Left ventricle myocardium inferior (tissue), 1 donor: ENCODE measurements at regions of chr12 and their contacts with region 1.

Region 1: GRCh38 chr12:96416033-96416801 is 16.0 kb upstream of the CDK17 start:
- DNase-seq: no peak
- H3K4me3 ChIP-seq: no peak overlapping the region
- H3K27ac ChIP-seq: no peak overlapping the region
- H3K4me1 ChIP-seq: no peaks in the 10 kb centered on the region
- H3K27me3 ChIP-seq: no peaks in the 10 kb centered on the region
- CTCF ChIP-seq: no peak

Region 2: GRCh38 chr12:96054244-96054610 is 362.0 kb before region 1 on chr12:
- intact Hi-C with region 1: loop called (anchors 10 kb)
- DNase-seq: no peak
- H3K4me3 ChIP-seq: peak overlapping the region; percentile 26
- H3K27ac ChIP-seq: peak overlapping the region; percentile 86
- H3K4me1 ChIP-seq: peaks cover 32% of the 10 kb centered on the region
- H3K27me3 ChIP-seq: no peaks in the 10 kb centered on the region
- CTCF ChIP-seq: no peak

Region 3: DNA sequence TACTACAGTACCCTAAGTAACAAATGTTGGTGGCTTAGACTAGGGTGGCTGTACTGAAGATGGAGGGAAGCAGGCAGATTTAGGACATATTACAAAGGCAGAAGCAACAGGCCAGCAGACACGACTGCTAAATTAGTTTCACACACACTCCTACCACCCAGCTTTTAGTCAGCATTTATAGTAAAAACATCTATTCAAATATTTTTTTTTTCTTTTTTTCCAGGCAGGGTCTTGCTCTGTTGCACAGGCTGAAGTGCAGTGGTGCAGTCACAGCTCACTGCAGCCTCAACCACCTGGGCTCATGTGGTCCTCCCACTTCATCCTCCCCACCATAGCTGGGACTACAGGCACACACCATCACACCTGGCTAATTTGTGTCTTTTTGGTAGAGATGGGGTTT is 88.9 kb before region 1 on chr12:
- intact Hi-C with region 1: no loop called
- DNase-seq: no peak
- H3K4me3 ChIP-seq: no peak overlapping the region
- H3K27ac ChIP-seq: no peak overlapping the region
- H3K4me1 ChIP-seq: peaks cover 27% of the 10 kb centered on the region
- H3K27me3 ChIP-seq: no peaks in the 10 kb centered on the region
- CTCF ChIP-seq: no peak